Panc1 (cell line): ENCODE measurements at regions of chr1 and their contacts with region 1.

Region 1: GRCh38 chr1:37156646-37157045 is 122.3 kb upstream of the GRIK3 start:
- DNase-seq: no peak
- ATAC-seq: no peak
- H3K4me3 ChIP-seq: no peak overlapping the region
- H3K27ac ChIP-seq: no peak overlapping the region
- H3K4me1 ChIP-seq: no peaks in the 10 kb centered on the region
- H3K27me3 ChIP-seq: 0 out of 2 replicates have a peak, but pooled peaks cover 2% of the 10 kb centered on the region
- CTCF ChIP-seq: no peak

Region 2: GRCh38 chr1:37083543-37084412 is 72.9 kb before region 1 on chr1:
- CTCF ChIA-PET with region 1: no interaction called
- POLR2A ChIA-PET with region 1: no interaction called
- in situ Hi-C with region 1: no loop called
- intact Hi-C with region 1: loop called (anchors 1 kb)
- DNase-seq: no peak
- ATAC-seq: no peak
- H3K4me3 ChIP-seq: no peak overlapping the region
- H3K27ac ChIP-seq: no peak overlapping the region
- H3K4me1 ChIP-seq: no peaks in the 10 kb centered on the region
- H3K27me3 ChIP-seq: 0 out of 2 replicates have a peak, but pooled peaks cover 3% of the 10 kb centered on the region
- CTCF ChIP-seq: no peak